ENCODE measurements at regions of chr19 and their contacts with region 1.

Region 1: GRCh38 chr19:47745010-47745901 is at the start of gene NOP53:
- DNase-seq: peak; percentile 98
- ATAC-seq: peak; percentile 71
- H3K4me3 Mint-ChIP-seq: peak within 1 kb of the TSS; percentile 98
- H3K27ac Mint-ChIP-seq: peak within 1 kb of the TSS; percentile 99
- H3K4me1 Mint-ChIP-seq: peaks cover 44% of the 10 kb centered on the region
- H3K27me3 Mint-ChIP-seq: no peaks in the 10 kb centered on the region
- total RNA-seq, gene NOP53: 317 to 374 TPM

Region 2: DNA sequence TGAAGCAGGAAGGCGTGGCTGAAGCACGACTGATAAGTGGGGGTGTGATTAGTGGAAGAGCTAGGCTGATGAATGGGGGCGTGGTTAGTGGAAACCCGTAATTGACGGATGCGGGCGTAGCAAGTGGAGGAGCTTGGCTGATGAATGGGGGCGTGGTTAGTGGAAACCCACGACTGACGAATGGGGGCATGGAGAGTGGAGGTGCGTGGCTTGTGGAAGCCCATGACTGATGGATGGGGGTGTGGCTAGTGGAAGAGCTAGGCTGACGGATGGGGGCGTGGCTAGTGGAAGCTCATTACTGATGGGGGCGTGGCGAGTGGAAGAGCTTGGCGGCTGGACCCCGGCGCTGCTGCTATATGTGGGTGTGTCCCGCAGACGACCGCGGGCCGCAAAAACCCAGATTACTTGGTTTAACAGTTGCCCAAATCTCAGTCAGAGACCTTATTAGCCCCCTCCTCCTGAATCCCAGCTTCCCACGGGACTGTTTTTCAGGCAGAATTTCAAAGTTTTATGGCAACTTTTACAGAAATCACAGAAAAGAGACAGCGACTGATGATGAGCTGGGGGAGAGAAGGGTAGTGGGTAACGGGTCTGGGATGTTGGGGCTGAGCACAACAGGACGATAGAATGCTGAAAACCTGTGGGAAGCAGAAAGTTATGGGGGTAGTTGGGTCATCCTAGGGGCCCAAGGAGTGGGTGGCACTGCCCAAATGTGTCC is 316.9 kb before region 1 on chr19:
- CTCF ChIA-PET with region 1: no interaction called
- POLR2A ChIA-PET with region 1: no interaction called
- intact Hi-C with region 1: loop called in 1 of 2 experiments (anchors 1 kb)
- DNase-seq: peak; percentile 94
- ATAC-seq: peak; percentile 75
- H3K4me3 Mint-ChIP-seq: no peak overlapping the region
- H3K27ac Mint-ChIP-seq: no peak overlapping the region
- H3K4me1 Mint-ChIP-seq: peaks cover 13% of the 10 kb centered on the region
- H3K27me3 Mint-ChIP-seq: peaks cover 39% of the 10 kb centered on the region

Region 3: DNA sequence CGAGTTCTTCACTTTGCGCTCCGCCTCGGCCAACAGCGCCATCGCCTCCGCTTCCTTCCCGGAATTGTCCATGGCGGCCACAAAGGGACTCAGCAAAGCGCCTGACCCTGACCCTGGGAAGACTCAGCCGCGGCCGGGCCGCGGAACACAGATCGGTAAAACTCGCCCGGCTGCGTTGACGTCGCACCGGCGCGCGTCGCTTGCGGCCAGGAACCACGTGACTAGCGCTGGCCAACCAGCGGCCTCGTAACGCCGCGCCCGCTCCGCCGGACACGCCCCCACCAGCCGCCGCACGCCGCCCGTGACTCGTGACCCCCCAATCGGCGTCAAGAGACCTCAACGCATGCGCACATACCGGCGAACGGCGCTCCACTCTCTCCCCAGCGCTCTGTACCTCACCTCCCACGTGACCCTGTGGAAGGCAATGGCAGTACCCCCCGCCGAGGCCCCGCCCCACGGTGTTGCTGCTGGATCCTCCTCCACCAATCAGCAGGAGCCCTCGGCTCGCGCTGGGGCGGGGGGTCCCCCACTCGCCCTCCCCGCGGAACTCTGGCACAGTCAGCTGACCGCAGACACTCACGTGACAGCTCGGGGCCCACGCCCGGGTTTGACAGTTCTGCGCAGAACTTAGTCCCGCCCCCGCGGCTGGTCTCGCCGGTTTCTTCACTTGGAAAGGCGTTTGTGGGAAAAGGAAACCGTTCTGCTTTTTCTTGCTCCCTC is 230.2 kb before region 1 on chr19 and contains the start of gene NAPA:
- CTCF ChIA-PET with region 1: no interaction called
- POLR2A ChIA-PET with region 1: interaction called, 4 read pairs
- intact Hi-C with region 1: loop called (anchors 1 kb)
- DNase-seq: peak; percentile 100
- ATAC-seq: peak; percentile 98
- H3K4me3 Mint-ChIP-seq: peak within 1 kb of the TSS; percentile 95
- H3K27ac Mint-ChIP-seq: peak within 1 kb of the TSS; percentile 99
- H3K4me1 Mint-ChIP-seq: peaks cover 76% of the 10 kb centered on the region
- H3K27me3 Mint-ChIP-seq: no peaks in the 10 kb centered on the region
- total RNA-seq, gene NAPA: 54.2 to 68.8 TPM

Region 4: GRCh38 chr19:47608074-47608918 is 137.0 kb before region 1 on chr19:
- CTCF ChIA-PET with region 1: no interaction called
- POLR2A ChIA-PET with region 1: no interaction called
- intact Hi-C with region 1: loop called in 1 of 2 experiments (anchors 1 kb)
- DNase-seq: peak; percentile 97
- ATAC-seq: peak; percentile 93
- H3K4me3 Mint-ChIP-seq: peak overlapping the region; percentile 79
- H3K27ac Mint-ChIP-seq: peak overlapping the region; percentile 72
- H3K4me1 Mint-ChIP-seq: peaks cover 27% of the 10 kb centered on the region
- H3K27me3 Mint-ChIP-seq: no peaks in the 10 kb centered on the region

Region 5: GRCh38 chr19:47707135-47707925 is 37.9 kb before region 1 on chr19:
- CTCF ChIA-PET with region 1: interaction called, 52 read pairs
- POLR2A ChIA-PET with region 1: no interaction called
- intact Hi-C with region 1: no loop called
- DNase-seq: peak; percentile 91
- ATAC-seq: peak; percentile 99
- H3K4me3 Mint-ChIP-seq: no peak overlapping the region
- H3K27ac Mint-ChIP-seq: no peak overlapping the region
- H3K4me1 Mint-ChIP-seq: peaks cover 5% of the 10 kb centered on the region
- H3K27me3 Mint-ChIP-seq: peaks cover 8% of the 10 kb centered on the region

Region 6: DNA sequence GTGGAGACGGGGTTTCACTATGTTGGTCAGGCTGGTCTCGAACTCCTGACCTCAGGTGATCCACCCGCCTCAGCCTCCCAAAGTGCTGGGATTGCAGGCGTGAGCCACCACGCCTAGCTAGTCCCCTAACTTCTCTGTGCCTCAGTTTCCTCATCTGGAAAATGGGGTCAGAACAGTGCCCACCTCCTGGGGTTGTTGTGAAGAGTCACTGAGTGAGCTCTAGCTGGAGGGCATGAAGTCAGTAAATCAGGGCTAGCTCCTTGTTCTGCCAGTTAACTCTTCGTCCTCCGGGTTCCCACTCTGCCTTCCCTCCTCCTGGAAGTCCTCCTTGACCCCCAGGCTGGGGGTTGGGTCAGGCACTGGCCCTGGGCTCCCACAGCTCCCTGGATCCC is 22.5 kb before region 1 on chr19:
- CTCF ChIA-PET with region 1: interaction called, 6 read pairs
- POLR2A ChIA-PET with region 1: no interaction called
- intact Hi-C with region 1: loop called in 1 of 2 experiments (anchors 1 kb)
- DNase-seq: no peak
- ATAC-seq: no peak
- H3K4me3 Mint-ChIP-seq: no peak overlapping the region
- H3K27ac Mint-ChIP-seq: no peak overlapping the region
- H3K4me1 Mint-ChIP-seq: peaks cover 3% of the 10 kb centered on the region
- H3K27me3 Mint-ChIP-seq: peaks cover 12% of the 10 kb centered on the region

Region 7: GRCh38 chr19:47778089-47778953 is 33.1 kb after region 1 on chr19 and contains the start of gene SELENOW:
- CTCF ChIA-PET with region 1: no interaction called
- POLR2A ChIA-PET with region 1: no interaction called
- intact Hi-C with region 1: loop called in 1 of 2 experiments (anchors 1 kb)
- DNase-seq: peak; percentile 87
- ATAC-seq: peak; percentile 92
- H3K4me3 Mint-ChIP-seq: peak within 1 kb of the TSS; percentile 95
- H3K27ac Mint-ChIP-seq: peak within 1 kb of the TSS; percentile 92
- H3K4me1 Mint-ChIP-seq: peaks cover 20% of the 10 kb centered on the region
- H3K27me3 Mint-ChIP-seq: no peaks in the 10 kb centered on the region
- total RNA-seq, gene SELENOW: 150 to 178 TPM

Region 8: GRCh38 chr19:48121909-48122371 is 376.7 kb after region 1 on chr19:
- CTCF ChIA-PET with region 1: no interaction called
- POLR2A ChIA-PET with region 1: no interaction called
- intact Hi-C with region 1: no loop called
- DNase-seq: peak; percentile 43
- ATAC-seq: peak; percentile 51
- H3K4me3 Mint-ChIP-seq: no peak overlapping the region
- H3K27ac Mint-ChIP-seq: peak overlapping the region; percentile 70
- H3K4me1 Mint-ChIP-seq: peaks cover 24% of the 10 kb centered on the region
- H3K27me3 Mint-ChIP-seq: no peaks in the 10 kb centered on the region

Measured in activated CD4-positive, alpha-beta T cell treated with anti-CD3 and anti-CD28 coated beads for 36 hours (primary cell).